Activated naive CD4-positive, alpha-beta T cell treated with anti-CD3 and anti-CD28 coated beads for 36 hours (primary cell): ENCODE measurements at regions of chr9 and their contacts with region 1.

Region 1: DNA sequence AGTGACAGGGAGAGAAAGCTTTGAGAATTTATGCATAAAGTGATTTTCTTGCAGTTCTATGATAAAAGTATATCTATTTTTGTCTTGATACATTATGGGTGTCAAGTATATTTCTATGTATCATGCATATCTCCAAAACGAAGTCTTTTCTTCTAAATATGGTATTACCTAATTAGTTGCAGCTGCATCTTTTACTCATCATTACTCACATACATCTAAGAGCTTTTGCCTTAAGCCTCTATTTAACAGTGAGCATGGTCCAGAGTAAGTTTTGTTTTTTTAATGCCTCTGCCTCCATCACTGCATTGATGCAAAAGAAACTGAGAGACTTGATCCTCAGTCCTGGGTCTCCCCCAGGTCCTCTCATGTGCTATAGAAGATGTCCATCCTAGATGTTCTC is 40.0 kb upstream of the SMC5 start:
- DNase-seq: no peak
- H3K4me3 Mint-ChIP-seq: no peak overlapping the region
- H3K27ac Mint-ChIP-seq: no peak overlapping the region
- H3K4me1 Mint-ChIP-seq: no peaks in the 10 kb centered on the region
- H3K27me3 Mint-ChIP-seq: no peaks in the 10 kb centered on the region

Region 2: DNA sequence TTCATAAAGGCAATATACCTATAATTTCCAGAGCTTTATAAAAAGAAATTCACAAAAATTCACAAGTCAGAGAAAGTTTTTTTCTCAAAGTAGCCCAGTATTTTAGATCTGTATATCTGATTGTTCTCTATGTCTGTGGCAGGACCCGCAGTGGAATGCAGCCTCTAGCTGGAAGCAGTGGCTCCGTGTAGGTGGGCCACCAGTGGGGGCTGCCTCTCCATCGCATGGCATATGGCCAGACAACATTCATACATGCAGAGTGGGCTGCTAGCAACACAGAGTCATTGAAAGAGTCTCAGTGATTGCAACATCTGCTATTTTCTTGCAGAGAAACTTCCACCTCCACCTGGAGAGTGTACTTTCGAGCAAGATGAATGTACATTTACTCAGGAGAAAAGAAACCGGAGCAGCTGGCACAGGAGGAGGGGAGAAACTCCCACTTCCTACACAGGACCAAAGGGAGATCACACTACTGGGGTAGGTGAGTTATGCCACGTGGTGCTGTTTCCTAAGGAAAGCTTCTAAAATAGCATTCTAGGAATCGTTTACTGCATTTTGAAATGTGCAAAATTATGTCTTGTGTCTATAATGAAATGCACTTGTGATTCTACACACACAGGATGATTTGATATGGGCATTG is 48.5 kb before region 1 on chr9:
- CTCF ChIA-PET with region 1: no interaction called
- intact Hi-C with region 1: loop called (anchors 5 kb)
- DNase-seq: no peak
- H3K4me3 Mint-ChIP-seq: no peak overlapping the region
- H3K27ac Mint-ChIP-seq: no peak overlapping the region
- H3K4me1 Mint-ChIP-seq: no peaks in the 10 kb centered on the region
- H3K27me3 Mint-ChIP-seq: no peaks in the 10 kb centered on the region

Region 3: DNA sequence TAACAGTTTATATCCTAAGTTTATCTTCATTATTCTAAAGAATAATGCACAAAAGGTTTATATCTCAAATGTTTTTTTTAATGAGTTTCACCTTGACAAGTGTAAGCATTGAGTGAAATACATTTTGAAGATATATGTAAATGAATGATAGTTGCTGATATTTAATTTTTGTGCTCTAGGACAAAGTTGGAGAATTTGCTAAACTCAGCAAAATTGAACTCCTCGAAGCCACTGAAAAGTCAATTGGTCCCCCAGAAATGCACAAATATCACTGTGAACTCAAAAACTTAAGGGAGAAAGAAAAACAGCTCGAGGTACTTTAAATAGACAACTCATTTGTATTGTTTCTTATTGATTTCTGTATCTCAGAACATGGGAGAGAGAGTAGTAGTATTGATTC is 59.5 kb after region 1 on chr9:
- CTCF ChIA-PET with region 1: no interaction called
- intact Hi-C with region 1: loop called (anchors 10 kb)
- DNase-seq: no peak
- H3K4me3 Mint-ChIP-seq: no peak overlapping the region
- H3K27ac Mint-ChIP-seq: no peak overlapping the region
- H3K4me1 Mint-ChIP-seq: peaks cover 16% of the 10 kb centered on the region
- H3K27me3 Mint-ChIP-seq: no peaks in the 10 kb centered on the region